Activated CD8-positive, alpha-beta T cell treated with anti-CD3 and anti-CD28 coated beads for 36 hours (primary cell): ENCODE measurements at regions of chr5 and their contacts with region 1.

Region 1: DNA sequence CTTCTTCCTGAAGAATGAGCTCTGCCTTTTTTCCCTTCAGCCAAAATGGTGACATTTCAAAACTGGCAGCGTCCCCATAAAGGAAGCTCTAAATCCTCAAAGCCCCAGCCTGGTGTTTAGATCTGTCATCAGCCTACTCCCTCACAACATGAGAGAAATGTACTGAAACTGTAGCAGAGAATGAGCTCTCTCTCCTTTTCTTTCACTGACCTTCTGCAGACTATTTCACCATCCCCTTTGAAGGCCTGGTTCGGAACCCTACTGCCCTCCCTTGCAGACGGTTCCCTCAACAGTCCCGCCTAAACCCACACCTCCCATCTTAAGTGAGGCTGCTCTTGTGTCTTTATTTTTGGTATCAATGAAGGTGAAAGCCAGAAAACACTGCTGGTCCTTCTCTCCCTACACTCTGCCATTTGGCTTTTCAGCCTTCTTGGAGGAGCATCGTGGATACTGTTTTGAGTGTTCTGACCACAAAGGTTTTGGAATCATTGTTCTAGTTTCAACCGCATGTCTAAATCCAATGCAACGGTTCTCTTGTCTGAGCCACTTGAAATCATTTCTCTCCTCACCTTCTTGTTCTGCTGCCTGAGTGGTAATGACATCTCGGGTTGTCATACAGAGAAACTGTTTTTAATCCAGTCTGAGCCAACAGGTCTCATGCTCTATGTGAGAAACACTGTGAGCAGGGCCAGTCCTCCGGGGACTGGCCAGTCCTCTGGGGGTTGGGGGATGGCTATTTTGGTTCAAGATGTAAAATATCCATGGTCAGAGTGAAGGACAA is 39.0 kb downstream of the ITK start:
- DNase-seq: peak; percentile 56
- ATAC-seq: peak; percentile 42
- H3K4me3 Mint-ChIP-seq: peak overlapping the region; percentile 49
- H3K27ac Mint-ChIP-seq: peak overlapping the region; percentile 92
- H3K4me1 Mint-ChIP-seq: peaks cover 82% of the 10 kb centered on the region
- H3K27me3 Mint-ChIP-seq: no peaks in the 10 kb centered on the region
- CTCF ChIP-seq: no peak

Region 2: GRCh38 chr5:157116483-157116954 is 103.2 kb before region 1 on chr5:
- CTCF ChIA-PET with region 1: no interaction called
- POLR2A ChIA-PET with region 1: no interaction called
- intact Hi-C with region 1: no loop called
- DNase-seq: peak; percentile 75
- ATAC-seq: peak; percentile 74
- H3K4me3 Mint-ChIP-seq: peak overlapping the region; percentile 54
- H3K27ac Mint-ChIP-seq: peak overlapping the region; percentile 84
- H3K4me1 Mint-ChIP-seq: peaks cover 35% of the 10 kb centered on the region
- H3K27me3 Mint-ChIP-seq: no peaks in the 10 kb centered on the region
- CTCF ChIP-seq: no peak

Region 3: GRCh38 chr5:157142317-157143126 is 77.2 kb before region 1 on chr5 and contains the start of gene MED7:
- CTCF ChIA-PET with region 1: interaction called, 18 read pairs
- POLR2A ChIA-PET with region 1: interaction called, 13 read pairs
- intact Hi-C with region 1: no loop called
- DNase-seq: peak; percentile 96
- ATAC-seq: peak; percentile 98
- H3K4me3 Mint-ChIP-seq: peak within 1 kb of the TSS; percentile 86
- H3K27ac Mint-ChIP-seq: peak within 1 kb of the TSS; percentile 98
- H3K4me1 Mint-ChIP-seq: peaks cover 39% of the 10 kb centered on the region
- H3K27me3 Mint-ChIP-seq: no peaks in the 10 kb centered on the region
- CTCF ChIP-seq: no peak
- total RNA-seq, gene MED7: 13.6 to 13.7 TPM

Region 4: DNA sequence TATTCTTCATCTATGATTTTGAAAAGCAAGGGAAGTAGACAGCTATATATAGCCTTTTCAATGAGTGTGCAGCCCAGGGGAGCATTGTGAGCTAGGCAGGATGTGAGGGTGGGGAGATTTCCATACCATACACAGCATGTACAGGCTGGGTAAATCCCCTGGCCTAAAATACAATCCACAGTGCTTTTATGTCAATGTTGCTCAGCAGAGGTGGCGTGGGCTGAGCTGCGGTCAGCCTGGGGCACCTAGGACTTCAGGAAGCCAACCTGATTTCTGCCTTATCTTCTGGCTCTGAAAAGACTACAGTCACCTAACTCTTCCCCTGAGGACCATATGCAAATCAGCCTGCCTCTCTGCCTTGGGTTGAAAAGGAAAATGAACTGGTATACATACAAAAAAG is 47.3 kb before region 1 on chr5:
- CTCF ChIA-PET with region 1: interaction called, 6 read pairs
- POLR2A ChIA-PET with region 1: interaction called, 1,980 read pairs
- intact Hi-C with region 1: no loop called
- DNase-seq: peak; percentile 98
- ATAC-seq: peak; percentile 92
- H3K4me3 Mint-ChIP-seq: peak overlapping the region; percentile 62
- H3K27ac Mint-ChIP-seq: peak overlapping the region; percentile 93
- H3K4me1 Mint-ChIP-seq: peaks cover 82% of the 10 kb centered on the region
- H3K27me3 Mint-ChIP-seq: no peaks in the 10 kb centered on the region
- CTCF ChIP-seq: no peak

Region 5: GRCh38 chr5:157198277-157198986 is 21.2 kb before region 1 on chr5:
- CTCF ChIA-PET with region 1: interaction called, 11 read pairs
- POLR2A ChIA-PET with region 1: interaction called, 1,980 read pairs
- intact Hi-C with region 1: no loop called
- DNase-seq: peak; percentile 82
- ATAC-seq: peak; percentile 74
- H3K4me3 Mint-ChIP-seq: peak overlapping the region; percentile 68
- H3K27ac Mint-ChIP-seq: peak overlapping the region; percentile 100
- H3K4me1 Mint-ChIP-seq: peaks cover 87% of the 10 kb centered on the region
- H3K27me3 Mint-ChIP-seq: no peaks in the 10 kb centered on the region
- CTCF ChIP-seq: no peak

Region 6: DNA sequence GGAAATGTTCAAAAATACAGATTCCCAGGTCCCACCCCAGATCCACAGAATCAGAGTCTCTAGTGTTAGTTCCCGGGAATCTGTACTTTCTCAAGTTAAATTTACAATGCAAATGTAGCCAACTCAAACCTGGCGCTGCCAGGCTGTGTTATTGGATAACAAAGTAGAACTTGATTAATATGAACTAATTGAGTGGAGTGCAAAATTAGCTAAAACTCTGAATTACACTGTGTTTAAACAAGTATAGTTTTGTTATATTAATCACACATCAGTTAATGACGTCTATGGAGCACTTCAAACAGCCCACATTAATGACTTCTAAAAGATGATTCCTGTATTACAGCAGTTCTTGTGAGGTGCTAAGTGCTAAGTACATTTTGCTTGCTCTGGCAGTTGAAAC is 13.8 kb after region 1 on chr5:
- CTCF ChIA-PET with region 1: interaction called, 4 read pairs
- POLR2A ChIA-PET with region 1: interaction called, 15 read pairs
- intact Hi-C with region 1: no loop called
- DNase-seq: no peak
- ATAC-seq: peak; percentile 58
- H3K4me3 Mint-ChIP-seq: no peak overlapping the region
- H3K27ac Mint-ChIP-seq: peak overlapping the region; percentile 89
- H3K4me1 Mint-ChIP-seq: peaks cover 75% of the 10 kb centered on the region
- H3K27me3 Mint-ChIP-seq: no peaks in the 10 kb centered on the region
- CTCF ChIP-seq: no peak

Region 7: DNA sequence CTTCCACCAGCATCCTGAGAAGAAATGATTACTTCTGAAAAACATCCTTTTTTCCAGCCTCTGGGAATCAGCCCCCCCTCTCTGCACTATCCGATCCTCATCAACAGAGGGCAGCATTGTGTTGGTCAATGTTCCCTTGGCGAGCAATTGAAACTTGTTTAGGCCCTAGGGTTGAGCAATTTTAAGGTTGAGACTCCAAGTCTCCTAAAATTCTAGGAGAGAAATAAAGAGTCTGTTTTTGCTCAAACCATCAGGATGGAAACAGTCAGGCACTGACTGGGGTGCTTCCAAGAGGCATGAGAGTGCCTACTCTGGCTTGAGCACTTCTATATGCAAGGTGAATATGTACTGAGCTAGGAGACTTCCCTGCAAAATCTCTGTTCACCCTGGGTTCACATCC is 33.9 kb after region 1 on chr5:
- CTCF ChIA-PET with region 1: interaction called, 10 read pairs
- POLR2A ChIA-PET with region 1: interaction called, 36 read pairs
- intact Hi-C with region 1: loop called (anchors 2 kb)
- DNase-seq: no peak
- ATAC-seq: no peak
- H3K4me3 Mint-ChIP-seq: peak overlapping the region; percentile 28
- H3K27ac Mint-ChIP-seq: peak overlapping the region; percentile 95
- H3K4me1 Mint-ChIP-seq: peaks cover 94% of the 10 kb centered on the region
- H3K27me3 Mint-ChIP-seq: no peaks in the 10 kb centered on the region
- CTCF ChIP-seq: peak; percentile 81

Region 8: DNA sequence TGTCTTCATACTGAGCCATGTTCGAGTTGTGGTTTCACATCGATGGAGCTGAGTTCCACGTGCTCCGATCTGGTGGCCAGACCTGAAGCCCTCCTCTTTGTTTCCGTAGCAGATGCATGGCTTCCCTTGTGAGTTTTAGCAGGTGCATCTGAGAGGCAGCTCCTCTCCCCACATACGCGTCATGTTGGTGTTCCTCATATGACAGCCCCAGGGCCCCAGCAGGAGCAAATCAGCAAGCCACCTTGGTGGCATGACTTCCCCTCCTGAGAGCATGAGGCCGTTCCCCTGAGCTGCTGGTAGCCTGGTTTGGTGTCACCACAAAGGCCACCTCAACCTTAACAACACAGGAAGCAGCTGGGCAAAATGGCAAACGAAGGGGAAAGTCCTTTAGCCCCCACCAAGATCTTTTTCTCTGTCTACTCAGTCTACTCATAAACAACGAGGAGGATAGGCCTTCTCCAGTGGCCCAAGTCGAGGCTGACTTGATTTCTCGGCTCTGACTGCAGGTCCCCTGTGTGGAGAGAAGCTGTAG is 52.1 kb after region 1 on chr5:
- CTCF ChIA-PET with region 1: interaction called, 4 read pairs
- POLR2A ChIA-PET with region 1: interaction called, 24 read pairs
- intact Hi-C with region 1: loop called (anchors 5 kb)
- DNase-seq: peak; percentile 97
- ATAC-seq: peak; percentile 80
- H3K4me3 Mint-ChIP-seq: peak overlapping the region; percentile 83
- H3K27ac Mint-ChIP-seq: peak overlapping the region; percentile 98
- H3K4me1 Mint-ChIP-seq: peaks cover 80% of the 10 kb centered on the region
- H3K27me3 Mint-ChIP-seq: no peaks in the 10 kb centered on the region
- CTCF ChIP-seq: no peak